Panc1 (cell line): ENCODE measurements at regions of chr10 and their contacts with region 1.

Region 1: GRCh38 chr10:87771871-87772500 is 46.0 kb downstream of the ATAD1 start:
- DNase-seq: no peak
- ATAC-seq: peak; percentile 67
- H3K4me3 ChIP-seq: no peak overlapping the region
- H3K27ac ChIP-seq: no peak overlapping the region
- H3K4me1 ChIP-seq: no peaks in the 10 kb centered on the region
- H3K27me3 ChIP-seq: no peaks in the 10 kb centered on the region
- CTCF ChIP-seq: peak; percentile 74

Region 2: GRCh38 chr10:87531908-87532622 is 239.9 kb before region 1 on chr10:
- CTCF ChIA-PET with region 1: no interaction called
- POLR2A ChIA-PET with region 1: no interaction called
- in situ Hi-C with region 1: no loop called
- intact Hi-C with region 1: loop called (anchors 2 kb)
- DNase-seq: no peak
- ATAC-seq: no peak
- H3K4me3 ChIP-seq: no peak overlapping the region
- H3K27ac ChIP-seq: no peak overlapping the region
- H3K4me1 ChIP-seq: no peaks in the 10 kb centered on the region
- H3K27me3 ChIP-seq: no peaks in the 10 kb centered on the region
- CTCF ChIP-seq: no peak

Region 3: GRCh38 chr10:87547734-87548311 is 224.2 kb before region 1 on chr10:
- CTCF ChIA-PET with region 1: no interaction called
- POLR2A ChIA-PET with region 1: no interaction called
- in situ Hi-C with region 1: no loop called
- intact Hi-C with region 1: no loop called
- DNase-seq: peak; percentile 36
- ATAC-seq: peak; percentile 51
- H3K4me3 ChIP-seq: no peak overlapping the region
- H3K27ac ChIP-seq: no peak overlapping the region
- H3K4me1 ChIP-seq: no peaks in the 10 kb centered on the region
- H3K27me3 ChIP-seq: no peaks in the 10 kb centered on the region
- CTCF ChIP-seq: no peak

Region 4: GRCh38 chr10:87850742-87851205 is 78.8 kb after region 1 on chr10:
- CTCF ChIA-PET with region 1: no interaction called
- POLR2A ChIA-PET with region 1: no interaction called
- in situ Hi-C with region 1: no loop called
- intact Hi-C with region 1: no loop called
- DNase-seq: no peak
- ATAC-seq: peak; percentile 95
- H3K4me3 ChIP-seq: no peak overlapping the region
- H3K27ac ChIP-seq: peak overlapping the region; percentile 35; the same call in 1 of the 2 replicates
- H3K4me1 ChIP-seq: peaks cover 13% of the 10 kb centered on the region
- H3K27me3 ChIP-seq: no peaks in the 10 kb centered on the region
- CTCF ChIP-seq: peak; percentile 89